HCT116 (cell line): ENCODE measurements at regions of chr20 and their contacts with region 1.

Region 1: DNA sequence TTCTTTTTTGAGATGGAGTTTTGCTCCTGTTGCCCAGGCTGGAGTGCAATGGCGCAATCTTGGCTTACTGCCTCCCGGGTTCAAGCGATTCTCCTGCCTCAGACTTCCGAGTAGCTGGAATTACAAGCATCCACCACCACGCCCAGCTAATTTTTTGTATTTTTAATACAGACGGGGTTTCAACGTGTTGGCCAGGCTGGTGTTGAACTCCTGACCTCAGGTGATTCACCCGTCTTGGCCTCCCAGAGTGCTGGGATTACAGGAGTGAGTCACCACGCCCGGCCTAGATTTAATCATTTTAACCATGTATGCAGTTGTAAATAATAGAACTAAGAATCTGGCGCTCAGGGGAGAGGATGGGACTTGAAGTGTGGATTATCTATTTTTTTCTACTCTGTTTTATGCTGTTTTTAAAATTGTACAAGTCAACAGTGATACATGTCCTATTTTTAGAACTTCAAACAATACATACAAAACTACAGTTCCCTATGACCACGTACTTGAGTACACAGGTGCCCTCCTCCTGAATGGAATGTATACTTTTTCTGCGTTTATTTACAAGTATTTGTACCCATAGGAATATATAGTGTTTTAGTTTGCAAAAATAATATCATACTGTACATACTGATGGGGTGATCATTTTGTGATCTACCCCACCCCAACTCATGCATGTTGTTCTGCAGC is 27.8 kb downstream of the ITCH start:
- DNase-seq: peak; percentile 85
- ATAC-seq: peak; percentile 91
- H3K4me3 ChIP-seq: peak overlapping the region; percentile 6 to 49; a peak in 2 of 4 replicates
- H3K27ac ChIP-seq: peak overlapping the region; percentile 83
- H3K4me1 ChIP-seq: peaks cover 59 to 79% of the 10 kb centered on the region in 2 experiments
- H3K27me3 ChIP-seq: no peaks in the 10 kb centered on the region
- CTCF ChIP-seq: no peak
- POLR2A ChIP-seq: no peak
- RAD21 ChIP-seq: peak; percentile 39; the same call in 1 of the 2 replicates

Region 2: DNA sequence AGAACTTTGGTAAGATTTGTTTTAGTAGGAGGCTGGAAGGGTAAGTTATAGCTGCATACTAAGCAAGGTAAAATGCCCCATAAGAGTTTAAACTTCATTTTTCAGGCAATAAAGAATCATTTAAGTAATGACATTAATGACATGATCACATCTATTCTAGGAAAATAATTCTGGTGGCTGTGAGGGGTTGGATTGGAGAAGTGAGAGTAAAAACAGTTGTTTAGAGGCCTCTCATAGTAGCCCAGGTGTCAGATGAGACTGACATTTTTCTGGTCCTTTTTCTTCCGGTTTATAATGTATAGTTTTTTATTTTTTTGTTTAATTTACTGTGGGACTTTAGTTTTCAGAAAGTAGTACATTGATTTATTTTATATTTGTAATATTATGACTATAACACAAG is 13.0 kb after region 1 on chr20:
- CTCF ChIA-PET with region 1: no interaction called
- POLR2A ChIA-PET with region 1: no interaction called
- RAD21 ChIA-PET with region 1: no interaction called
- intact Hi-C with region 1: loop called (anchors 1 kb)
- DNase-seq: no peak
- ATAC-seq: no peak
- H3K4me3 ChIP-seq: no peak overlapping the region
- H3K27ac ChIP-seq: no peak overlapping the region
- H3K4me1 ChIP-seq: peaks cover 26 to 39% of the 10 kb centered on the region in 2 experiments
- H3K27me3 ChIP-seq: no peaks in the 10 kb centered on the region
- CTCF ChIP-seq: no peak
- POLR2A ChIP-seq: no peak
- RAD21 ChIP-seq: no peak

Region 3: DNA sequence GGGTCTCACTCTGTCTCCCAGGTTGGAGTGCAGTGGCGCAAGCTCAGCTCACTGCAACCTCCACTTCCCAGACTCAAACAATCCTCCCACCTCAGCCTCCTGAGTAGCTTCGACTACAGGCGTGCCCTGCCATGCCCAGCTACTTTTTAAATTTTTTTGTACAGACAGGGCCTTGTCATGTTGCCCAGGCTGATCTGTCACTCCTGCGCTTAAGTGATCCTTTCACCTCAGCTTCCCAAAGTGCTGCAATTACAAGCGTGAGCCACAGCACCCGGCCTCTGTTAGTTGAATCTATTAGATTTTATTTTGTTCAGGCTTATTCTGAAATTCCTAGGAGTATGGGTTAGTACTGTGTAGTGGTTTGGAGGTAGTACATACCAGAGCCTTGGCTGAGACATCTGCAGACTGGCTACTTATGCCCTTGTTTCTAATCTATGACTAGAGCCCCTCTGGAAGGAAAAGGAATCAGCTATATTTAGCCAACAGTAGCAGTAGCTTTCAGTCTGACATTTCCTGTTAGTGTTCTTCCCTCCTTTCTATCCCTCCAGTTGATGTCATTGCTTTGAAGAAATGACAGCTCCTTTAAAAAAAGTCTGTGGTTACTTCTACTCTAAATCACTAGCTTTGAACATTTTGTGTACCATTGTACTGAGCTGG is 46.5 kb after region 1 on chr20:
- CTCF ChIA-PET with region 1: no interaction called
- POLR2A ChIA-PET with region 1: no interaction called
- RAD21 ChIA-PET with region 1: no interaction called
- intact Hi-C with region 1: no loop called
- DNase-seq: no peak
- ATAC-seq: no peak
- H3K4me3 ChIP-seq: no peak overlapping the region
- H3K27ac ChIP-seq: no peak overlapping the region
- H3K4me1 ChIP-seq: no peaks in the 10 kb centered on the region
- H3K27me3 ChIP-seq: no peaks in the 10 kb centered on the region
- CTCF ChIP-seq: no peak
- POLR2A ChIP-seq: no peak
- RAD21 ChIP-seq: no peak

Region 4: DNA sequence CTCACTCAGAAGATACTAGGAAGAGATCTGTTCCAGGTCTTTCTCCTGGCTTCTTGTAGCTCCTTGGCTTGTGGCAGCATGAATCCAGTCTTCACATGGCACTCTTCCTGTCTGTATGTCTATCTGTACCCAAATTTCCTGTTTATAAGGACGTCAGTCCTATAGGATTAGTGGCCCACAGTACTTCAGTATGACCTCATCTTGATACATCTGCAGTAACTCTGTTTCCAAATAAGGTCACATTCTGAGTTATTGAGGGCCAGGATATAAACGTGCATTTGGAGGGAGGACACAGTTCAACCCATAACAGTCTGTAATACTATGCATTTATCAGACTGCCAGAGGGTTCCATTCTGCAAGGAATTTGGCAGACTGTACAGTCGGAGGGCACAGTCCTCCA is 67.7 kb after region 1 on chr20:
- CTCF ChIA-PET with region 1: no interaction called
- POLR2A ChIA-PET with region 1: no interaction called
- RAD21 ChIA-PET with region 1: no interaction called
- intact Hi-C with region 1: no loop called
- DNase-seq: no peak
- ATAC-seq: no peak
- H3K4me3 ChIP-seq: no peak overlapping the region
- H3K27ac ChIP-seq: no peak overlapping the region
- H3K4me1 ChIP-seq: no peaks in the 10 kb centered on the region
- H3K27me3 ChIP-seq: no peaks in the 10 kb centered on the region
- CTCF ChIP-seq: no peak
- POLR2A ChIP-seq: no peak
- RAD21 ChIP-seq: no peak

Region 5: DNA sequence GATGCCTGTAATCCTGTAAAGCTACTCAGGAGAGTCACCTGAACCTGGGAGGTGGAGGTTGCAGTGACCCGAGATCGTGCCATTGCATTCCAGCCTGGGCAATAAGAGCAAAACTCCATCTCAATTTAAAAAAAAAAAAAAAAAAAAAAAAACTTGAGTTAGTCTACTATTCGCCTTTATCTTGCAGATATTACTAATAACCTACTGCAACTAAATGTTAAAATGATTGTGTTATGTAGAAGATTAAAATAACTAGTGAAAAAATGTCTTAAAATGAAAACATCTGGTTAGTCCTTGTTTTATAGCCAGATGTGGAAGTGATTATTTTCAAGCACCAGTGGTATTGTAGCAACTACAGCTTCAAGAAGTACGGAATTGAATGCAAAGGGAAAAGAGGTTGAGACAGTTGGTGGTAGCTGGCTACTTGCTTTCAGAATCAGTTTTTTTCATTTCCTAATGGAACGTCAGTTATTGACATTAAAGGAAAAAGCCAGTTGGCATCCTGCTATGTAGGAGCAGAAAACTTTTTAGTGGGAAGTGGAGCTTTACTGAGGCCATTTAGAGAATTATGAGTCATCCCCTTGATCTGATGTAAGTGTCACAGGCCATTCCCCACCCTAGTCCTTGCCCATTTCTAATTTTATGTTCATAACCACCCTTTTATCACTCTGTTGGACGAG is 81.5 kb after region 1 on chr20:
- CTCF ChIA-PET with region 1: no interaction called
- POLR2A ChIA-PET with region 1: no interaction called
- RAD21 ChIA-PET with region 1: no interaction called
- intact Hi-C with region 1: no loop called
- DNase-seq: peak; percentile 75
- ATAC-seq: peak; percentile 86
- H3K4me3 ChIP-seq: peak overlapping the region in 1 of 2 experiments; percentile 27; a peak in 3 of 4 replicates
- H3K27ac ChIP-seq: peak overlapping the region; percentile 81
- H3K4me1 ChIP-seq: peaks cover 41 to 45% of the 10 kb centered on the region in 2 experiments
- H3K27me3 ChIP-seq: no peaks in the 10 kb centered on the region
- CTCF ChIP-seq: no peak
- POLR2A ChIP-seq: no peak
- RAD21 ChIP-seq: peak; percentile 34; the same call in 1 of the 2 replicates